AG04449 (cell line): ENCODE measurements at regions of chr14 and their contacts with region 1.

Region 1: DNA sequence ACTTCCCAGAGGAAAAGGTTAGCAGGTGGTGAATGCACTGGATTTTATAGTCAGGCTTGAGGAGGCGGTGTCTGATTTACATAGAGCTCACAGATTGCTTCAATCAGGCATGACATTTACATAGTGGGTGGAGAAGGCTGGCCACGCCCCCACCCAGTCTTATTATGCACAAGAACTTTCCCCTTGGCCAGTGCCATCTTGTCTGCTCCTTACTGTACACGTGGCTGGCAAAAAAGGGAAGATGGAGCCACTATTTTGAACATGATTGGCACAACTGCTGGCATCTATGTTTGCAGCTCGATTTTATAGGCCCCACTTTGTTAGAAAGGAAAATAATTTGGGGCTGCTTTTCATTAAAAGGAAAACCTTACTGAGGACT is 10.9 kb upstream of the LGMN start:
- DNase-seq: no peak
- H3K4me3 ChIP-seq: no peak overlapping the region
- CTCF ChIP-seq: no peak

Region 2: GRCh38 chr14:92748259-92749016 is 10.9 kb before region 1 on chr14 and contains the start of gene LGMN:
- CTCF ChIA-PET with region 1: interaction called, 4 read pairs
- POLR2A ChIA-PET with region 1: interaction called, 14 read pairs
- DNase-seq: peak; percentile 66
- H3K4me3 ChIP-seq: peak within 1 kb of the TSS; percentile 85
- CTCF ChIP-seq: no peak